ENCODE measurements at regions of chr3 and their contacts with region 1.

Region 1: DNA sequence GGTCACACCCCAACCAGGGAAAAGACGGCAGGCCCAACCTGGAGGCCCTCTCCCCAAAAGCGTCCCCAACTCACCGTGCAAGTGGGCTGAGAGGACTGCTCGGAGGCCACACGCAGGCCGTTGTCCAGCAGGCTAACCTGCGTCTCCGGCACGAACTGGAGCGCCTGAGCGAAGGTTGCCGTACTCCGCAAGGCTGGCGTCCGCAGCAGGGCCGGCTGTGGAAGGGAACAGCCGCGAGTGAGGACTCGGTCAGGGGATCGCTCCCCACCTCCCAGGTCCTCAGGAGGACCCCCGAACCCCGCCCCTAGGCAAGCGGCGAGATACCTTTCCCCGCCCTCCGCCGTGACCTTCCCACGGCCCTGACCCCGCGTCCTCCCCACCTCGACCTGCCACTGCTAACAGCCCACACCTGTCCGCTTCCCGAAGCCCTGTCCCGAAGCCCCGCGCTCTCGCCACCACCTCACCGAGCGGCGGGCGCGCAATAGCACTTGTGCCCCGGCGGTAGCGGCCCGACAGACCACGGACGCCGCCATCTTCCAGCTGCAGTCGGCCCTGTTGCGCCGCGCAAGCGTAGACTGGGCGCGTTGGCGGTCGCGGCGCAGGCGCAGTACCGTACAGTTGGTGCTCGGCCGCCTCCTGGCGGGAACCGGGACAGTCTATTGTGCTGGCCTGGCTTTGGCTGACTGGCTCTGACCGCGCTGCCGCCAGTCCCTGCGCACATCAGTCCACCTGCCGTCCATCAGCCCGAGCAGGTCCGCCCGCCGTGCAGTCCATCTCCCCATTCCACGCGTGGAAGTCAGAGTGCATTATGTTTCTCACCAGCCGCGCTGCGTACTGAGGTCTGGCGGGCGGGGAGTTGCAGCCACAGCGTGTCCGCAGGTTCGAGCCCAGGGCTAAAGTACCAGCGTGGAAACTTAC is at the start of gene UQCRC1:
- DNase-seq: peak; percentile 85 to 94 (median 93)
- ATAC-seq: peak; percentile 99
- H3K4me3 ChIP-seq: peak within 1 kb of the TSS; percentile 96
- H3K4me3 Mint-ChIP-seq: peak within 1 kb of the TSS; percentile 86 to 100 (median 98)
- H3K27ac ChIP-seq: peak within 1 kb of the TSS; percentile 84
- H3K27ac Mint-ChIP-seq: peak within 1 kb of the TSS; percentile 91 to 99 (median 97)
- H3K4me1 ChIP-seq: peaks cover 10 to 12% of the 10 kb centered on the region in 2 donors
- H3K4me1 Mint-ChIP-seq: peaks cover 12 to 31% (median 19%) of the 10 kb centered on the region in 7 donors
- H3K27me3 ChIP-seq: no peaks in the 10 kb centered on the region
- H3K27me3 Mint-ChIP-seq: no peaks in the 10 kb centered on the region
- total RNA-seq, gene UQCRC1: 77.3 to 156 (median 91.7) TPM

Region 2: GRCh38 chr3:48232734-48233133 is 376.6 kb before region 1 on chr3:
- CTCF ChIA-PET with region 1: no interaction called
- POLR2A ChIA-PET with region 1: no interaction called
- intact Hi-C with region 1: loop called in 1 of 2 experiments (anchors 5 kb)
- DNase-seq: peak; percentile 21 to 54 (median 44)
- ATAC-seq: peak; percentile 92
- H3K4me3 ChIP-seq: no peak overlapping the region
- H3K4me3 Mint-ChIP-seq: no peak overlapping the region
- H3K27ac ChIP-seq: no peak overlapping the region
- H3K27ac Mint-ChIP-seq: no peak overlapping the region
- H3K4me1 ChIP-seq: no peaks in the 10 kb centered on the region
- H3K4me1 Mint-ChIP-seq: peaks cover 0 to 6% (median 3%) of the 10 kb centered on the region in 7 donors
- H3K27me3 ChIP-seq: no peaks in the 10 kb centered on the region
- H3K27me3 Mint-ChIP-seq: peaks cover 0 to 6% (median 0%) of the 10 kb centered on the region in 5 donors

Region 3: GRCh38 chr3:48301020-48301796 is 308.1 kb before region 1 on chr3:
- CTCF ChIA-PET with region 1: no interaction called
- POLR2A ChIA-PET with region 1: no interaction called
- intact Hi-C with region 1: no loop called
- DNase-seq: peak; percentile 69 to 95 (median 81)
- ATAC-seq: peak; percentile 97
- H3K4me3 ChIP-seq: peak within 1 kb of the TSS; percentile 89
- H3K4me3 Mint-ChIP-seq: peak within 1 kb of the TSS; percentile 84 to 97 (median 91)
- H3K27ac ChIP-seq: peak within 1 kb of the TSS; percentile 96
- H3K27ac Mint-ChIP-seq: peak within 1 kb of the TSS; percentile 81 to 98 (median 94)
- H3K4me1 ChIP-seq: peaks cover 10 to 12% of the 10 kb centered on the region in 2 donors
- H3K4me1 Mint-ChIP-seq: peaks cover 26 to 47% (median 40%) of the 10 kb centered on the region in 7 donors
- H3K27me3 ChIP-seq: no peaks in the 10 kb centered on the region
- H3K27me3 Mint-ChIP-seq: peaks cover 0 to 13% (median 0%) of the 10 kb centered on the region in 5 donors

Region 4: GRCh38 chr3:48400824-48401433 is 208.4 kb before region 1 on chr3:
- CTCF ChIA-PET with region 1: interaction called, 4 read pairs
- POLR2A ChIA-PET with region 1: no interaction called
- intact Hi-C with region 1: loop called (anchors 1 to 2 kb)
- DNase-seq: peak; percentile 33 to 76 (median 66)
- ATAC-seq: peak; percentile 86
- H3K4me3 ChIP-seq: no peak overlapping the region
- H3K4me3 Mint-ChIP-seq: no peak overlapping the region
- H3K27ac ChIP-seq: no peak overlapping the region
- H3K27ac Mint-ChIP-seq: peak overlapping the region in 1 of 9 donors; percentile 47
- H3K4me1 ChIP-seq: no peaks in the 10 kb centered on the region
- H3K4me1 Mint-ChIP-seq: peaks cover 0 to 3% (median 0%) of the 10 kb centered on the region in 7 donors
- H3K27me3 ChIP-seq: no peaks in the 10 kb centered on the region
- H3K27me3 Mint-ChIP-seq: peaks cover 0 to 7% (median 3%) of the 10 kb centered on the region in 5 donors

Region 5: GRCh38 chr3:48656061-48656840 is 46.9 kb after region 1 on chr3:
- CTCF ChIA-PET with region 1: no interaction called
- POLR2A ChIA-PET with region 1: no interaction called
- intact Hi-C with region 1: loop called (anchors 1 to 2 kb)
- DNase-seq: peak; percentile 75 to 87 (median 86)
- ATAC-seq: peak; percentile 90
- H3K4me3 ChIP-seq: peak overlapping the region; percentile 70
- H3K4me3 Mint-ChIP-seq: peak overlapping the region; percentile 67 to 86 (median 80)
- H3K27ac ChIP-seq: peak overlapping the region; percentile 65
- H3K27ac Mint-ChIP-seq: peak overlapping the region; percentile 42 to 88 (median 79)
- H3K4me1 ChIP-seq: peaks cover 12 to 14% of the 10 kb centered on the region in 2 donors
- H3K4me1 Mint-ChIP-seq: peaks cover 6 to 23% (median 9%) of the 10 kb centered on the region in 7 donors
- H3K27me3 ChIP-seq: no peaks in the 10 kb centered on the region
- H3K27me3 Mint-ChIP-seq: peaks cover 0 to 15% (median 5%) of the 10 kb centered on the region in 5 donors